Posterior vena cava (tissue), 2 donors: ENCODE measurements at regions of chr3 and their contacts with region 1.

Region 1: GRCh38 chr3:122679085-122679881 is 1.4 kb upstream of the PARP14 start:
- DNase-seq: peak; percentile 91

Region 2: GRCh38 chr3:122392868-122393844 is 286.1 kb before region 1 on chr3:
- intact Hi-C with region 1: loop called in 1 of 2 experiments (anchors 10 kb)
- DNase-seq: no peak

Region 3: DNA sequence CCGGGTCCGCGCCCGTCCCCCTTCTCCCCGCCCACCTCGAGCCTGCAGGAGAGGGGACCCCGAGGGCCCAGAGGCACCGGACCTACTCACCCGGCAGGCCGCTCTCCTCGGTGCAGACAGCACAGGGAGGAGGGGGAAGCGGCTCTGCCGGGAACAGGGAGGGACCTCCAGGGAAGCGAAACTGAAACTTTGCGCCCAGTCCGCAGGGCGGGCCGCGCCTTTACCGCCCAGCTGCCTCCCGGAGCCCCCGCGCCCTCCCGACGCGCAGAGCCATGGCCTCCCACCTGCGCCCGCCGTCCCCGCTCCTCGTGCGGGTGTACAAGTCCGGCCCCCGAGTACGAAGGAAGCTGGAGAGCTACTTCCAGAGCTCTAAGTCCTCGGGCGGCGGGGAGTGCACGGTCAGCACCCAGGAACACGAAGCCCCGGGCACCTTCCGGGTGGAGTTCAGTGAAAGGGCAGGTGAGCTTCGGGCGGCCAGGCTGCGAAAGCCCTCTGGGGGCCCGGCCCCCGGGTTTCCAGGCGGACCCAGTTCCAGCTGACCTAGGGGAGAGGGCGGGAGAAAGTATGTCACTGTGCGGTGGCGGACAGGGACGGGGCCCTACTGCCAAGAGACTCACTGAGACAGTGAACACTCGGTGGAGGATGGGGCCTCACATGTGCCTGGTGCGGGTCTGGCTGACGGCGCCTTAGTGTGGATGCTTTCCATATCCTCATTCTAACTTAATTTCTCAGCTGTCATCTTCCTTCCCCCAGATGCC is 114.9 kb before region 1 on chr3 and contains the starts of genes DTX3L and PARP9:
- intact Hi-C with region 1: loop called (anchors 5 kb)
- DNase-seq: peak; percentile 95
- total RNA-seq, gene DTX3L: 22.8 to 32.0 TPM
- total RNA-seq, gene PARP9: 29.8 to 31.9 TPM